ENCODE measurements at regions of chr2 and their contacts with region 1.

Region 1: GRCh38 chr2:10802657-10803056 is 9.9 kb downstream of the PDIA6 start:
- DNase-seq: no peak
- ATAC-seq: no peak; a peak in 1 of 6 replicates
- H3K4me3 ChIP-seq: no peak overlapping the region
- H3K27ac ChIP-seq: no peak overlapping the region
- H3K4me1 ChIP-seq: 0 out of 3 replicates have a peak, but pooled peaks cover 2% of the 10 kb centered on the region
- CTCF ChIP-seq: no peak
- EP300 ChIP-seq: no peak
- POLR2A ChIP-seq: no peak
- RAD21 ChIP-seq: no peak

Region 2: DNA sequence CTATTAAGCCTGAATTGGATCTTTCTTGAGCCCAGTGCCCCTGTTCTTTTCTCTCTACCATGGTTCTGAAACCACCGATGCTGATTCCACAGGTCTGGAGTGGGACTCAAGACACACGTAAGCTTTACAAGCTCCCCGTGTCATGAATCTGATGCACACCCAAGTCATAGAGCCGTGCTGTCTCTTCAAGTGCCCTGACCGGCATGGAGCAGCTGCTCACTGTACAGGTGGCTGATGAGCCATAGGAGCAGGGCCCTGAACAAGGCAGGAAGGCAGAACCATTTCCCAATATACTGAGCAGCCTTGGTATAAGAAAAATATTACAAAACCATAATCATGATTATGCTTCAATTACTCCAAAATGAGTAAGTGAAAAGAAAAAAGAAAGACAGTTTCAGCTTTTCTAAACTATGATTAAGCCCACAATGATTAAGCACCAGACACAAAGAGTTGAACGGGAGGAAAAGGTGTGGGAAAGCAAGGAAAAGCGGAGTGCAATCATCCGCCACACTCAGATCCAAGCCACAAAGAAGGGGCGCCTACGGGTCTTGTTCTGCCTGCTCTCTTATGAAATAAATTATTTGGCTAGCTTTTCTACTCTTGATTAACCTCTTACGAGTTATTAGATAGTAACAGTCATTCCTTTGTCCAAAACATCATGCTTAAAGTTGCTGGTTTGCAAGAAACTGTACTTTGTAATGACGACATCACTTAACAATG is 154.6 kb before region 1 on chr2:
- CTCF ChIA-PET with region 1: no interaction called
- POLR2A ChIA-PET with region 1: no interaction called
- DNase-seq: no peak
- ATAC-seq: peak in 1 of 2 experiments; percentile 30; a peak in 2 of 6 replicates
- H3K4me3 ChIP-seq: no peak overlapping the region
- H3K27ac ChIP-seq: no peak overlapping the region
- H3K4me1 ChIP-seq: no peaks in the 10 kb centered on the region
- CTCF ChIP-seq: no peak
- EP300 ChIP-seq: no peak
- POLR2A ChIP-seq: no peak
- RAD21 ChIP-seq: no peak

Region 3: GRCh38 chr2:10790228-10790979 is 12.3 kb before region 1 on chr2:
- CTCF ChIA-PET with region 1: interaction called, 14 read pairs
- POLR2A ChIA-PET with region 1: interaction called, 3 read pairs
- DNase-seq: no peak
- ATAC-seq: no peak
- H3K4me3 ChIP-seq: no peak overlapping the region
- H3K27ac ChIP-seq: no peak overlapping the region
- H3K4me1 ChIP-seq: no peaks in the 10 kb centered on the region
- CTCF ChIP-seq: no peak
- EP300 ChIP-seq: no peak
- POLR2A ChIP-seq: no peak
- RAD21 ChIP-seq: no peak

Region 4: GRCh38 chr2:10818984-10819383 is 16.3 kb after region 1 on chr2:
- CTCF ChIA-PET with region 1: no interaction called
- POLR2A ChIA-PET with region 1: no interaction called
- DNase-seq: no peak
- ATAC-seq: no peak
- H3K4me3 ChIP-seq: no peak overlapping the region
- H3K27ac ChIP-seq: no peak overlapping the region
- H3K4me1 ChIP-seq: no peaks in the 10 kb centered on the region
- CTCF ChIP-seq: no peak
- EP300 ChIP-seq: no peak
- POLR2A ChIP-seq: no peak
- RAD21 ChIP-seq: no peak

Region 5: DNA sequence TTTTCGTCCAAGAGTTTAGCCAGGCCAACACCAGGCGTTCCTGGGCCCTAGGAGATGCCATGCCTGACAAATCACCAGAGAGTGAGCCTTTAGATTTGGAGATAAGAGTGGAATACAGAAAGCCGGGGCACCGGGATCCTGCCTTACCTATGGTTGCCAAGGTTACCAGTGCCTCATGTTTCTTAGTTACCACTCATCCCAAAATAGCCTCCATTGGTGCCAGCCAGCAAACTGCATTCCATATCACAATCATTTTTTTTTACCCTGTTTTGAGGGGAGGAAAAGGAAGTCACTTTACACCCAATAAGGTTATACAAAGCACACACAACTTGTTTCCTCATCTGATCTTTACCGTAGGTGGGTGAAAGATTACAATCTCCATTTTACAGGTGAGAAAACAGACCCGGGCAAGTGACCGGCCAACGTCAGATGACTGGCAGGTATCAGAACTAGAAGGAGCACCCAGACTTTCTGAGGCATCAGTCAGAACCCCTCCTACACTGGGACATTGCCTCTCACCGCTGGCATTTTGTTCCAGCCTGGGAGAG is 58.2 kb after region 1 on chr2:
- CTCF ChIA-PET with region 1: no interaction called
- POLR2A ChIA-PET with region 1: no interaction called
- DNase-seq: no peak
- ATAC-seq: no peak
- H3K4me3 ChIP-seq: no peak overlapping the region
- H3K27ac ChIP-seq: no peak overlapping the region
- H3K4me1 ChIP-seq: no peaks in the 10 kb centered on the region
- CTCF ChIP-seq: no peak
- EP300 ChIP-seq: no peak
- POLR2A ChIP-seq: no peak
- RAD21 ChIP-seq: no peak

Measured in A549 (cell line).